ENCODE measurements at regions of chr4 and their contacts with region 1.

Region 1: DNA sequence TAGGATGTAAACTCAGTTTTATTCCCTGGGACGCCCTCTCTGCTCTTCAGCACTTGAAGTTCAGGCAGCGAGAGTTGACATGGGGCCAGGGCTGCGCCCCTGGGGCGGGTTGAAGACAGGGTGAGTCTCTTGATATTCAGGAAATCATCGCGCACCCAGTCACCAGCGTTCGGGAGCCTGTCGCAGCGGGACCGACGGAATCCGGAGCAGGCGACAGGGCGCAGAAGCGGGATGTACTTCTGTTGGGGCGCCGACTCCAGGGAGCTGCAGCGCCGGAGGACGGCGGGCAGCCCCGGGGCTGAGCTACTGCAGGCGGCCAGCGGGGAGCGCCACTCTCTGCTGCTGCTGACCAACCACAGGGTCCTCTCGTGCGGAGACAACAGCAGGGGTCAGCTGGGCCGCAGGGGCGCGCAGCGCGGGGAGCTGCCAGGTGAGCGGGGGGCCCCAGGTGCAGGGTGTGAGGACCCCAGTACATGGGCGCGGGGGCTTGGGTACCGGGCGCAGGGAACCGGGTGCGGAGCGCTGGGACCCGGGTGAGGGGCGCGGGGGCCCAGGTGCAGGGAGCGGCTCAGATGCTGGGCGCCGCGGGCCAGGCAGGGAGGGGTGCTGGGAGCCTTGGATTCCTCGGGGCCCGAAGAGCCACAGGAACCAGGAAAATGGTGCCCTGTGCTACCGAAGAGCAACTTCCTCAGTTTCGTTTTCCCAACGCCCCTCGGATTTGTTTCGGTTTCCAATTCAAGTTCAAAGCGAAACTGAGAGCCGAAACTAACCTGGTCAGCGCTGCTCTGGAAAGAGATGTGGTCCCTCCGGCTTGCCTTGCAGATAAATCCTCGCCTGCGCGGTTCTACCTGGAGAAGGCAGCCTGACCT is at the start of gene HERC6:
- DNase-seq: peak; percentile 81 to 89 (median 83)
- ATAC-seq: peak; percentile 91 to 98 (median 97)
- H3K4me3 ChIP-seq: peak within 1 kb of the TSS; percentile 46 to 100 (median 90)
- H3K27ac ChIP-seq: peak within 1 kb of the TSS; percentile 91 to 100 (median 97)
- H3K4me1 ChIP-seq: peaks cover 0 to 17% (median 0%) of the 10 kb centered on the region in 12 donors
- H3K27me3 ChIP-seq: no peaks in the 10 kb centered on the region
- CTCF ChIP-seq: peak; percentile 53 to 89 (median 70)
- POLR2A ChIP-seq: no peak
- total RNA-seq, gene HERC6: 6.1 to 22.0 (median 15.6) TPM

Region 2: GRCh38 chr4:87530868-87531267 is 848.1 kb before region 1 on chr4:
- intact Hi-C with region 1: no loop called
- DNase-seq: peak; percentile 64 to 86 (median 78)
- ATAC-seq: peak; percentile 90 to 96 (median 92)
- H3K4me3 ChIP-seq: peak overlapping the region in 9 of 12 donors; percentile 49 to 64 (median 61)
- H3K27ac ChIP-seq: peak overlapping the region; percentile 74 to 93 (median 84)
- H3K4me1 ChIP-seq: peaks cover 0 to 37% (median 24%) of the 10 kb centered on the region in 12 donors
- H3K27me3 ChIP-seq: no peaks in the 10 kb centered on the region
- CTCF ChIP-seq: no peak
- POLR2A ChIP-seq: peak in 1 of 2 donors; percentile 56

Region 3: GRCh38 chr4:88225232-88226105 is 153.5 kb before region 1 on chr4:
- intact Hi-C with region 1: loop called in 7 of 10 experiments (anchors 5 to 10 kb)
- DNase-seq: no peak
- ATAC-seq: peak in 3 of 4 donors; percentile 37 to 51 (median 50)
- H3K4me3 ChIP-seq: no peak overlapping the region
- H3K27ac ChIP-seq: peak overlapping the region in 2 of 12 donors; percentile 26 to 35
- H3K4me1 ChIP-seq: peaks cover 0 to 20% (median 5%) of the 10 kb centered on the region in 12 donors
- H3K27me3 ChIP-seq: no peaks in the 10 kb centered on the region
- CTCF ChIP-seq: no peak
- POLR2A ChIP-seq: no peak

Region 4: GRCh38 chr4:88230969-88231771 is 147.8 kb before region 1 on chr4:
- intact Hi-C with region 1: loop called in 4 of 10 experiments (anchors 10 kb)
- DNase-seq: no peak
- ATAC-seq: peak; percentile 39 to 74 (median 72)
- H3K4me3 ChIP-seq: peak overlapping the region in 10 of 12 donors; percentile 23 to 58 (median 48)
- H3K27ac ChIP-seq: peak overlapping the region in 11 of 12 donors; percentile 58 to 86 (median 78)
- H3K4me1 ChIP-seq: peaks cover 0 to 16% (median 6%) of the 10 kb centered on the region in 12 donors
- H3K27me3 ChIP-seq: no peaks in the 10 kb centered on the region
- CTCF ChIP-seq: no peak
- POLR2A ChIP-seq: no peak

Region 5: GRCh38 chr4:88419874-88420273 is 40.9 kb after region 1 on chr4:
- intact Hi-C with region 1: no loop called
- DNase-seq: no peak
- ATAC-seq: no peak
- H3K4me3 ChIP-seq: no peak overlapping the region
- H3K27ac ChIP-seq: no peak overlapping the region
- H3K4me1 ChIP-seq: peaks cover 0 to 2% (median 0%) of the 10 kb centered on the region in 12 donors
- H3K27me3 ChIP-seq: no peaks in the 10 kb centered on the region
- CTCF ChIP-seq: no peak
- POLR2A ChIP-seq: no peak

Region 6: GRCh38 chr4:88442703-88443191 is 63.8 kb after region 1 on chr4:
- intact Hi-C with region 1: loop called in 1 of 10 experiments (anchors 10 kb)
- DNase-seq: no peak
- ATAC-seq: no peak
- H3K4me3 ChIP-seq: no peak overlapping the region
- H3K27ac ChIP-seq: no peak overlapping the region
- H3K4me1 ChIP-seq: peaks cover 0 to 9% (median 0%) of the 10 kb centered on the region in 12 donors
- H3K27me3 ChIP-seq: no peaks in the 10 kb centered on the region
- CTCF ChIP-seq: no peak
- POLR2A ChIP-seq: no peak

Region 7: DNA sequence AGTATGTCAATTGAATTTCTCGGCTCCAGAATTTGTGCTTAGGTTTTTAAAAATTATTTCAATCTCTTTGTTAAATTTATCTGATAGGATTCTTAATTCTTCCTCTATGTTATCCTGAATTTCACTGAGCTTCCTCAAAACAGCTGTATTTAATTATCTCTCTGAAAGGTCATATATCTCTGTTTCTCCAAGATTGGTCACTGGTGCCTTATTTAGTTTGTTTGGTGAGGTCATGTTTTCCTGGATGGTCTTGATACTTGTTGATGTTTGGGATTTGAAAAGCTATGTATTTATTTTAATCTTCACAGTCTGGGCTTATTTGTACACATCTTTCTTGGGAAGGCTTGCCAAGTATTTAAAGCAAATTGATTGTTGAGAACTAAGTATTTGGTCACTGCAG is 188.7 kb after region 1 on chr4:
- intact Hi-C with region 1: no loop called
- DNase-seq: no peak
- ATAC-seq: no peak
- H3K4me3 ChIP-seq: no peak overlapping the region
- H3K27ac ChIP-seq: no peak overlapping the region
- H3K4me1 ChIP-seq: peaks cover 0 to 5% (median 0%) of the 10 kb centered on the region in 12 donors
- H3K27me3 ChIP-seq: no peaks in the 10 kb centered on the region
- CTCF ChIP-seq: no peak
- POLR2A ChIP-seq: no peak